ENCODE measurements at regions of chr15 and their contacts with region 1.

Region 1: GRCh38 chr15:100785181-100786134 is 94.2 kb upstream of the ALDH1A3 start:
- DNase-seq: no peak

Region 2: DNA sequence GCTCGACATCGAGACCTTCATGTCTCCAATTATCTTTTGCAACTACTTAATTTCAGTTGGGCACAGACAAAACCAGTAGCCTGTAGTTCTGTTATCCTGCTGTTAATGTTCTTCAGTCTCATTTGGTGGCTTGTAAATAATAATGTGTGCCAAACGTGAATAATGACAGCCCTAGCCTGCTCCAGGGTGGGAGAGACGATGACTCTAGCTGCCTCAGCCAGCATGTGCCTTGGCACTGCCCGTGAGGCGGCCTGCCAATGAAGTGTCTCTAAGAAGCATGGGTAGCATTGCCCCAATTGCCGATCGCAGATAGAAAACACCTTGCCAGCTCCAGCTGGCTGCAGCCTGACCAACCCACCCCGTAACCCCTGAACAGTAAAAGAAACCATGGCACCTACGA is 124.3 kb before region 1 on chr15:
- CTCF ChIA-PET with region 1: no interaction called
- POLR2A ChIA-PET with region 1: no interaction called
- DNase-seq: no peak

Region 3: DNA sequence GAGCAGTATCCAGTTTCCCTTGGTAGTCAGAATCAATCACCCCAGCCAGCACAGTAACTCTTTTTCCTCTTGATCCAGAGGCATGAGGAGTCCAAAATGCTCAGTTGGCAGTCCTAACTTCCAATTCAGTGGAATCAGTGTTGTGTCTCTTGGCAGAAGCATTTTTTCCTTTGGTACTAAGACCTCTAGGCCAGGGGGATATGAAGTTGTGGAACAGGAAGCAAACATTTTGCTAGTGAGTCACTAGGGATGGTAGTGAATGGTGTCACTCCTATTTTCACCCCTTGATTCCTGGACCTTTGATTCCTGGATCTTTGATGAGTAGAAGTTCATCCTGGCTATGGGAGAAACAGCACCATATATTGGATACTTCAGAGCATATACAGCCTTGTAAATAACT is 23.7 kb after region 1 on chr15:
- CTCF ChIA-PET with region 1: interaction called, 10 read pairs
- POLR2A ChIA-PET with region 1: no interaction called
- DNase-seq: no peak

Region 4: GRCh38 chr15:100821327-100821726 is 35.9 kb after region 1 on chr15:
- CTCF ChIA-PET with region 1: no interaction called
- POLR2A ChIA-PET with region 1: no interaction called
- DNase-seq: no peak